ENCODE measurements at regions of chr1 and their contacts with region 1.

Region 1: GRCh38 chr1:41698916-41699860 is 214.7 kb upstream of the EDN2 start:
- DNase-seq: peak; percentile 61

Region 2: DNA sequence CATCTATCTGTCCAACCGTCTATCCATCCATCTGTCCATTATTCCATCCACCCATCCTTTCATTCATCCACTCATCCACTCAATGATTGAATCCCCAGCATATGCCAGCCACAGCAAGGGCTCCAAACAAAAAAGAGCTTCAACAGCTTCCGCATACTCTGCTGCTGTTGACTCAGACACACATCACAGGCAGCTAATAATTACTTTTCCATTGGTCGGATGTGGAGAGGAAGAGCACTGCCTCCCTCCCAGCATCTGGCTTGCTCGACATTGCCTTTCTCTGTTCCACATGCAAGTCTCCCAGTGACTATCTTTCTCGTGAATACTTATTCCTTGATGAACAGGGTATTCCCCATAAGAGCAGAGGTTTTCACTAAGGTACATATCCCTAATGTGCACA is 43.0 kb after region 1 on chr1:
- intact Hi-C with region 1: no loop called
- DNase-seq: peak; percentile 5

Region 3: DNA sequence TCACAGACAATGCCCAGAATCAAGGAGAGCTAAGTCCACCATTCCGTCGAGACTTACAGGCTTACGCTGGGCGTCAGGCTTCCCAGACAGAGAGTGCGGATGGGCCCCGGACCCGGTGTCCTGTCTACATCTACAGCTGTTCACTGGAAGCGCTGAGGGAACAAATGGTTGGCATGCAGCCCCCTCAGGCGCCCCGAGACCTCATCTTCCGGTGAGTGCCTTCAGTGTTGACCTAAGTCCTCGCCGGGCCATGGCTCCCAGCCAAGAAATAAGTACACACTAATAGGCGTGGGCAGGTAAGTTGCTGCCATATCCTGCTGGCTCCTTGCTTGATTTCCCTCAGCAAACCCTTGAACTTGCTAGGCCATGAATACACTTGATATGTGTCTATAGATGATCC is 1728.3 kb after region 1 on chr1:
- intact Hi-C with region 1: loop called in 1 of 2 experiments (anchors 5 kb)
- DNase-seq: peak; percentile 73

Measured in posterior vena cava (tissue), 2 donors.